ENCODE measurements at regions of chr11 and their contacts with region 1.

Region 1: GRCh38 chr11:102780491-102780918 is at the start of gene MMP10:
- DNase-seq: peak; percentile 23
- H3K4me3 ChIP-seq: no peak within 1 kb of the TSS
- H3K27ac ChIP-seq: no peak within 1 kb of the TSS
- H3K27me3 ChIP-seq: no peaks in the 10 kb centered on the region
- CTCF ChIP-seq: peak; percentile 75
- polyA plus RNA-seq, gene MMP10: 0.87 and 0.97 TPM in 2 replicates

Region 2: DNA sequence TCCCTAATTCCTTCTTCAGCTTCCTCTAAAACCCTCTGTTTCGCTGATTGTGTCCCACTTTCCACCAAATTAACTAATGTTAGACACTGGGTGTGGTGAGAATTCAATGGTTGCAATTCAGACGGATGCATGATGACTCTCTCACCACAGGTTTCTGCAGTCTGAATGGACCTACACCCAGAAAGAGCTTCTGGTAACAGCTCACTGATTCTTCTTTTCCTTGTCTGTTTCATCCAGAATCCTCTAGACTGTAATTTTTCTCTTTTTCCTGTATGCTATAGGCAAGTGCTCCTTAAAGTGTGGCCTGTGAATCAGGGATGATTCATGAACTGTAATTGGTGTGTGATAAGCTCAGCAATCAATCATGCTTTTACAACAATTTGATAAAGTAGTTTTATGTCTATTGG is 18.1 kb before region 1 on chr11:
- CTCF ChIA-PET with region 1: interaction called, 11 read pairs
- POLR2A ChIA-PET with region 1: interaction called, 4 read pairs
- DNase-seq: no peak
- H3K4me3 ChIP-seq: no peak overlapping the region
- H3K27ac ChIP-seq: no peak overlapping the region
- H3K27me3 ChIP-seq: no peaks in the 10 kb centered on the region
- CTCF ChIP-seq: no peak